Esophagus muscularis mucosa (tissue), 4 donors: ENCODE measurements at regions of chr15 and their contacts with region 1.

Region 1: GRCh38 chr15:63048115-63048775 is 5.7 kb downstream of the TPM1 start:
- DNase-seq: peak; percentile 96
- H3K4me3 ChIP-seq: peak overlapping the region; percentile 70 to 91 (median 82)
- H3K27ac ChIP-seq: peak overlapping the region; percentile 93 to 97 (median 96)
- H3K4me1 ChIP-seq: peaks cover 40 to 75% (median 63%) of the 10 kb centered on the region in 4 donors
- H3K27me3 ChIP-seq: peaks cover 0 to 6% (median 0%) of the 10 kb centered on the region in 4 donors
- CTCF ChIP-seq: peak; percentile 84 to 89 (median 86)
- EP300 ChIP-seq: no peak
- POLR2A ChIP-seq: peak; percentile 20

Region 2: DNA sequence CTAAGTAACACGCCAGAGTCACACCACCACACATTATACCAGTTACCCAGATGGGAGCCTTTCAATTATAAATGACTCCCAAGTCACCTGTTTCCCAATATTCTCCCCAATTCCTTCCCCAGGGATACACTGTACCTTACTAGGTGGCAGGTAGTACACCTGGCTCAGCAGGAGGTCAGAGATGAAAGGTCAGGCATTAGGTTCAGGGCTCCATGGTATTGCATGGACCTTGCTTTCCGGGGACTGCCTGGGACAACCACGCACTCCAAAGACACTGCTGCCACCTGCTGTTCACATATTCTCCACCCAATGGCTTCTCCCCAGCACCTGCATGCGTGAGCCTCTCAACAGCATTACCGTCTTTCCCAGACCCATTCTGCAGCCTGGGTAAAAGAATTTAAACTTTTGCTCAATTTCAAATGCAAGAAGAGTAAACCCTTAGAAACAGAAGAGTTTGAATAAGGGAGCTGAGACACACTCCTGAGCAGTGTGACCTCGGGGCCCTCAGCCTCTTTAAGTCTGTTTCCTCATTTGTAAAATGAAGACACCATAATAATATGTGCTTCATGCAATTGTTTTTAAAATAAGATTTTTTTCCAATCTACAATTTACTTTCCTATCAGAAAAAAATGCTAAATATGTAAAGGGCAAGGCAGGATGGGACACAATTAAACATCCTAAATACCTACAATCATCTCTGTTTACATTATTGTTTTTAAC is 45.4 kb after region 1 on chr15:
- intact Hi-C with region 1: loop called (anchors 5 kb)
- DNase-seq: peak; percentile 95
- H3K4me3 ChIP-seq: no peak overlapping the region
- H3K27ac ChIP-seq: peak overlapping the region; percentile 64 to 76 (median 67)
- H3K4me1 ChIP-seq: peaks cover 21 to 36% (median 34%) of the 10 kb centered on the region in 4 donors
- H3K27me3 ChIP-seq: no peaks in the 10 kb centered on the region
- CTCF ChIP-seq: peak; percentile 90 to 93 (median 91)
- EP300 ChIP-seq: no peak
- POLR2A ChIP-seq: no peak